ENCODE measurements at regions of chr7 and their contacts with region 1.

Region 1: GRCh38 chr7:25179771-25180591 is 48.3 kb downstream of the NPVF start:
- DNase-seq: peak; percentile 89 to 99 (median 98)
- ATAC-seq: peak; percentile 96
- H3K4me3 ChIP-seq: peak overlapping the region; percentile 51
- H3K27ac ChIP-seq: peak overlapping the region; percentile 69
- H3K4me1 ChIP-seq: peaks cover 8% of the 10 kb centered on the region in 2 experiments; a peak in 3 of 5 replicates
- H3K27me3 ChIP-seq: no peaks in the 10 kb centered on the region
- CTCF ChIP-seq: peak; percentile 48 to 86 (median 69)
- EP300 ChIP-seq: no peak
- POLR2A ChIP-seq: peak; percentile 78
- RAD21 ChIP-seq: peak in 1 of 2 experiments; percentile 35; a peak in 1 of 4 replicates

Region 2: GRCh38 chr7:25216837-25217236 is 36.9 kb after region 1 on chr7:
- CTCF ChIA-PET with region 1: no interaction called
- POLR2A ChIA-PET with region 1: no interaction called
- in situ Hi-C with region 1: no loop called
- intact Hi-C with region 1: loop called (anchors 5 kb)
- DNase-seq: peak; percentile 21 to 62 (median 27)
- ATAC-seq: peak; percentile 72
- H3K4me3 ChIP-seq: no peak overlapping the region
- H3K27ac ChIP-seq: no peak overlapping the region
- H3K4me1 ChIP-seq: no peaks in the 10 kb centered on the region
- H3K27me3 ChIP-seq: peaks cover 20 to 32% of the 10 kb centered on the region in 2 experiments
- CTCF ChIP-seq: peak; percentile 47 to 73 (median 51); a peak in 4 of 6 replicates
- EP300 ChIP-seq: no peak
- POLR2A ChIP-seq: no peak
- RAD21 ChIP-seq: peak in 1 of 2 experiments; percentile 39; a peak in 1 of 4 replicates

Measured in K562 (cell line).